Aorta (tissue), 5 donors: ENCODE measurements at regions of chr3 and their contacts with region 1.

Region 1: DNA sequence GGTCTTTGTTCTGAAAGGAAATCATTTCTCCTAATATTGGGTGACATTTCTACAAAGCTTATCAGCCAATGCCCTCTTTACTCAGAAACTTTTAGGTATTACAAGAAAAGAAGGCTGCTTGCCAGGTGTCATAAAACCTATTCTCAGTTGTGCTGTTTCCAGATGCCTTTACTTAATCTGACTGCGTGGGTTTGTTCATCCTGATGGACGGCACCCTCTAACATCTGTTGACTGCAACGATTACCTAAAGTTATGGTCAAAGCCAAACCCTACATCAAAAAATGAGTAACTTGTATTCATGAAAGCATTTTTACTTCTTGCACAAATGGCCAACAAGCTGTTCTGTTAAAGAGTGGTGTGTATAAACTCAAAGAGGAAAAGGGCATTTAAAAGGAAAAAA is 207.7 kb upstream of the PDZRN3 start:
- DNase-seq: no peak
- ATAC-seq: no peak
- H3K4me3 ChIP-seq: no peak overlapping the region
- H3K27ac ChIP-seq: no peak overlapping the region
- H3K4me1 ChIP-seq: peaks cover 4 to 8% of the 10 kb centered on the region in 2 donors
- H3K27me3 ChIP-seq: no peaks in the 10 kb centered on the region

Region 2: GRCh38 chr3:73529308-73530021 is 303.0 kb before region 1 on chr3:
- intact Hi-C with region 1: loop called in 1 of 2 experiments (anchors 5 kb)
- DNase-seq: no peak
- ATAC-seq: no peak
- H3K4me3 ChIP-seq: no peak overlapping the region
- H3K27ac ChIP-seq: peak overlapping the region in 1 of 2 donors; percentile 57
- H3K4me1 ChIP-seq: peaks cover 3 to 10% of the 10 kb centered on the region in 2 donors
- H3K27me3 ChIP-seq: no peaks in the 10 kb centered on the region

Region 3: GRCh38 chr3:73855813-73856514 is 23.5 kb after region 1 on chr3:
- intact Hi-C with region 1: no loop called
- DNase-seq: no peak
- ATAC-seq: no peak
- H3K4me3 ChIP-seq: no peak overlapping the region
- H3K27ac ChIP-seq: no peak overlapping the region
- H3K4me1 ChIP-seq: no peaks in the 10 kb centered on the region
- H3K27me3 ChIP-seq: no peaks in the 10 kb centered on the region